T-cell (primary cell): ENCODE measurements at regions of chr3 and their contacts with region 1.

Region 1: GRCh38 chr3:178140531-178141304 is 395.5 kb upstream of the KCNMB2 start:
- DNase-seq: no peak
- ATAC-seq: no peak
- H3K4me3 ChIP-seq: no peak overlapping the region
- H3K4me3 Mint-ChIP-seq: no peak overlapping the region
- H3K27ac ChIP-seq: no peak overlapping the region
- H3K27ac Mint-ChIP-seq: no peak overlapping the region
- H3K4me1 ChIP-seq: no peaks in the 10 kb centered on the region
- H3K4me1 Mint-ChIP-seq: no peaks in the 10 kb centered on the region
- H3K27me3 ChIP-seq: no peaks in the 10 kb centered on the region
- H3K27me3 Mint-ChIP-seq: no peaks in the 10 kb centered on the region

Region 2: GRCh38 chr3:177211503-177212277 is 929.0 kb before region 1 on chr3:
- CTCF ChIA-PET with region 1: no interaction called
- POLR2A ChIA-PET with region 1: interaction called in 1 of 2 experiments, 12 read pairs
- DNase-seq: peak in 1 of 35 experiments; percentile 19
- ATAC-seq: peak in 2 of 4 experiments; percentile 27 to 71
- H3K4me3 ChIP-seq: no peak overlapping the region
- H3K4me3 Mint-ChIP-seq: no peak overlapping the region
- H3K27ac ChIP-seq: no peak overlapping the region
- H3K27ac Mint-ChIP-seq: peak overlapping the region in 1 of 2 donors; percentile 55
- H3K4me1 ChIP-seq: no peaks in the 10 kb centered on the region
- H3K4me1 Mint-ChIP-seq: peaks cover 4 to 6% (median 5%) of the 10 kb centered on the region in 3 donors
- H3K27me3 ChIP-seq: no peaks in the 10 kb centered on the region
- H3K27me3 Mint-ChIP-seq: no peaks in the 10 kb centered on the region

Region 3: GRCh38 chr3:177337541-177338331 is 803.0 kb before region 1 on chr3:
- CTCF ChIA-PET with region 1: no interaction called
- POLR2A ChIA-PET with region 1: no interaction called
- DNase-seq: peak in 9 of 35 experiments; percentile 6 to 75 (median 24)
- ATAC-seq: peak in 2 of 4 experiments; percentile 44 to 61
- H3K4me3 ChIP-seq: no peak overlapping the region
- H3K4me3 Mint-ChIP-seq: no peak overlapping the region
- H3K27ac ChIP-seq: no peak overlapping the region
- H3K27ac Mint-ChIP-seq: peak overlapping the region in 1 of 2 donors; percentile 47
- H3K4me1 ChIP-seq: peaks cover 3 to 8% of the 10 kb centered on the region in 2 experiments
- H3K4me1 Mint-ChIP-seq: peaks cover 24 to 36% (median 26%) of the 10 kb centered on the region in 3 donors
- H3K27me3 ChIP-seq: no peaks in the 10 kb centered on the region
- H3K27me3 Mint-ChIP-seq: no peaks in the 10 kb centered on the region

Region 4: GRCh38 chr3:178405531-178405930 is 264.8 kb after region 1 on chr3:
- CTCF ChIA-PET with region 1: no interaction called
- POLR2A ChIA-PET with region 1: no interaction called
- DNase-seq: no peak
- ATAC-seq: no peak
- H3K4me3 ChIP-seq: no peak overlapping the region
- H3K4me3 Mint-ChIP-seq: no peak overlapping the region
- H3K27ac ChIP-seq: no peak overlapping the region
- H3K27ac Mint-ChIP-seq: no peak overlapping the region
- H3K4me1 ChIP-seq: no peaks in the 10 kb centered on the region
- H3K4me1 Mint-ChIP-seq: no peaks in the 10 kb centered on the region
- H3K27me3 ChIP-seq: no peaks in the 10 kb centered on the region
- H3K27me3 Mint-ChIP-seq: peaks cover 15 to 18% of the 10 kb centered on the region in 2 donors